Breast epithelium (tissue), 4 donors: ENCODE measurements at regions of chr2 and their contacts with region 1.

Region 1: GRCh38 chr2:238263204-238264071 is 23.6 kb upstream of the HES6 start:
- DNase-seq: peak; percentile 89 to 90
- H3K4me3 ChIP-seq: no peak overlapping the region
- H3K27ac ChIP-seq: peak overlapping the region; percentile 82 to 84
- H3K4me1 ChIP-seq: peaks cover 0 to 8% of the 10 kb centered on the region in 2 donors
- H3K27me3 ChIP-seq: no peaks in the 10 kb centered on the region
- CTCF ChIP-seq: peak; percentile 73 to 86 (median 86)
- POLR2A ChIP-seq: no peak

Region 2: GRCh38 chr2:238320246-238320647 is 56.8 kb after region 1 on chr2 and contains the start of gene TRAF3IP1:
- intact Hi-C with region 1: loop called (anchors 5 kb)
- DNase-seq: peak; percentile 90 to 95
- H3K4me3 ChIP-seq: peak within 1 kb of the TSS; percentile 74 to 89 (median 82)
- H3K27ac ChIP-seq: peak within 1 kb of the TSS; percentile 78 to 87
- H3K4me1 ChIP-seq: peaks cover 6 to 10% of the 10 kb centered on the region in 2 donors
- H3K27me3 ChIP-seq: no peaks in the 10 kb centered on the region
- CTCF ChIP-seq: no peak
- POLR2A ChIP-seq: no peak
- total RNA-seq, gene TRAF3IP1: 12.1 to 20.6 (median 15.7) TPM